ENCODE measurements at regions of chr21 and their contacts with region 1.

Region 1: DNA sequence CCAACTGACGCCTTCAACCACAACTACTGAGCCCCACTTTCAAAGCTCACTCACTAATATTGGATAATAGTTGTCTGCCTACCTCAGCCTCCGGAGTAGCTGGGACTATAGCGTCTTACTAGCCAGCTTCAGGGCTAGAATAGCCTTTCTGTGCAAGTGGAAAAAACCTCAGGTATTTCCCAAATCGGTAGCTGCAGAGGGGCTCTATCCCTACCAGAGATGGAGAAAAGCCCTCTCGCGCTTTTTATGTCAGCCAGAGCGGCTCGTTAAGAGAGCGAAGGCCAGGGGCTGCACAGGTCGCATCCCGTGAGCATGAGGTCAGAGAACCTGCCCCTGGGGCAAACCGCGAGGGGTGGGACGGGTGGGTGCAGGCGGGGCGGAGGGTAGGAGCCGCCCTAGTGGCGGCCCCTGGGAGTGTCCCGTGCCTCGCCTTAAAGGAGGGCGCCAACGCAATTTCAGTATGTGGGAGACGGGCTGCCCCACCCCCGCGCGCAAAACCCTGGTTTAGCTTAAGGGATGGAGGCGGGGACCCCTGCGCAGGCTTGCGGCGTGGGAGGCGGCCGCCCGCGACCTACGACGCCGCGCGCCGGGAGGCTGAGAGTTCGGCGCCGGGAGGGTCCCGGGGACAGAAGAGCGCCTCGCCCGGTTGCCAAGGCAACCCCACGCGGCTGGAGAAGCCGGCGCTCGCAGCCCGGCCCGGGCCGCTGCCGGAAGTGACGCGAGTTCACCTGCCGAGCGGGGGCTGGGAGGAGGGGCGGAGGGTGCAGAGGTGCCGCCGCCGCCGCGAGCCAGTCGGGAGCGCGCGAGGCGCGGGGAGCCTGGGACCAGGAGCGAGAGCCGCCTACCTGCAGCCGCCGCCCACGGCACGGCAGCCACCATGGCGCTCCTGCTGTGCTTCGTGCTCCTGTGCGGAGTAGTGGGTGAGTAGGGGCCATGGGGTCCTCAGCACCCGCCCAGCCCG is at the start of gene CXADR:
- DNase-seq: peak; percentile 96

Region 2: GRCh38 chr21:17501107-17502006 is 11.2 kb before region 1 on chr21:
- CTCF ChIA-PET with region 1: interaction called, 10 read pairs
- POLR2A ChIA-PET with region 1: interaction called, 12 read pairs
- DNase-seq: no peak

Region 3: GRCh38 chr21:17527240-17527639 is 14.7 kb after region 1 on chr21:
- CTCF ChIA-PET with region 1: interaction called, 3 read pairs
- POLR2A ChIA-PET with region 1: interaction called, 13 read pairs
- DNase-seq: no peak

Region 4: GRCh38 chr21:17679002-17679600 is 166.6 kb after region 1 on chr21:
- CTCF ChIA-PET with region 1: no interaction called
- POLR2A ChIA-PET with region 1: no interaction called
- DNase-seq: peak; percentile 68

Measured in HEK293T (cell line).